ENCODE measurements at regions of chr3 and their contacts with region 1.

Region 1: DNA sequence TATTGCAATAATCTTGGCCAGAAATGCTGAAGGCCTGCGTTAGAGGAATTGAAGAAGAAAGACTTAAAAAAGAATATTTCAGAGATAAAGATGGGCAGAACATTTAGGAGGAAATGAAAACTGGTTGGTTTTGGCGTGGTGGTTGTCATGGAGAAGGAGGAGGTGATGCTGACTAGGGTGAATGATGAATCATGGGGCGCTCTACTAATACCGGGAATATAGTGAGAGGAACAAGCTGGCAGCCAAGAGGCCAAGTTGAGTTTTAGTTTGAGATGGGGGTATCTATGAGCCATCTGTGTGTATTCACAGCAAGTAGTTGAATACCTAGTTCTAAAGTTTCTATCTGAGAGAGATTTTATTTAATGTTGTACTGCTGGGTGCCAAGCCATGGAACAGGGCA is 6.8 kb upstream of the GAP43 start:
- DNase-seq: peak; percentile 67
- H3K4me3 Mint-ChIP-seq: no peak overlapping the region
- H3K27ac Mint-ChIP-seq: no peak overlapping the region
- H3K4me1 Mint-ChIP-seq: peaks cover 23% of the 10 kb centered on the region
- H3K27me3 Mint-ChIP-seq: peaks cover 10% of the 10 kb centered on the region

Region 2: GRCh38 chr3:115502128-115502527 is 114.3 kb before region 1 on chr3:
- CTCF ChIA-PET with region 1: no interaction called
- POLR2A ChIA-PET with region 1: no interaction called
- intact Hi-C with region 1: no loop called
- DNase-seq: no peak
- H3K4me3 Mint-ChIP-seq: no peak overlapping the region
- H3K27ac Mint-ChIP-seq: no peak overlapping the region
- H3K4me1 Mint-ChIP-seq: no peaks in the 10 kb centered on the region
- H3K27me3 Mint-ChIP-seq: peaks cover 6% of the 10 kb centered on the region

Region 3: DNA sequence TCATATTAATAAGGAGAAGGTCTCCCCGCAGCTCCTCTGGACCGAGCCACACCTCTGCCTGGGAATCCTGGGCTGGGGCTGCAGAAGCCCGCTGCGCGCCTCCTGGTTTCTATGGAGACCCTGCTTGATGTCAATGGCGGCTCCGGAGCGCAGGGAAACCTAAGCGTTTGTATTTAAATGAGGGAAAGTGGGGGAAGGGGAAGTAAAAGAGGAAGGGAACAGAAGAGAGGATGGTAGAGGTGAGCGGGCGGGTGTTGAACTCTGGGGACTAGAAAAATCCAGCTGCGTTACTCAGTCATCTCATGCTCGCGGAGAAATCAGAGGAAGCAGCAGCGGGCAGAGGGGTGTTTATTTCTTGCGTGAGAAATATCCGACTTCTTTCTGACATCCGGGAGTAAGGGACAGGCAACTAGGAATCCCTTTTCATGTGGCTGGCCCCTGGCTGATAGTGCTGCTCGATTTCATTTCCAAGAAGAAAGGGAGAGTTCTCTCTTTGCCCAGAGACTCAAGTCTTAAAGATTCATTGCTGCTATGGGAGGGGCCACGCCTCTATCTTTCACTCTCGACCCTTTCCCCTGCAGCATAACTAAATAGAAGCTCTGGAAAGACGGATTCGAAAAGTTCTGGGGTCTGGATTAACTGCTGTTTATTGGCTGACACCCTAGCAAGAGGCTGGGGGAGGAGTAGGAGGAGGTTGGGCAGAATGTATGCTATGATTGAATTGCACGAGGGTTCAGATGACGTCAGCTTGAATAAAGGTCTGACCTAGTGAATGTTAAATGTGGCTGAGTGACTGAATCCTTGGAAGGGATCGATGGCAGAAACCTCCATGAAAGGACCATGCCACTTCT is 103.7 kb before region 1 on chr3:
- CTCF ChIA-PET with region 1: no interaction called
- POLR2A ChIA-PET with region 1: no interaction called
- intact Hi-C with region 1: loop called (anchors 1 kb)
- DNase-seq: peak; percentile 40
- H3K4me3 Mint-ChIP-seq: peak overlapping the region; percentile 79
- H3K27ac Mint-ChIP-seq: no peak overlapping the region
- H3K4me1 Mint-ChIP-seq: peaks cover 13% of the 10 kb centered on the region
- H3K27me3 Mint-ChIP-seq: peaks cover 14% of the 10 kb centered on the region

Region 4: DNA sequence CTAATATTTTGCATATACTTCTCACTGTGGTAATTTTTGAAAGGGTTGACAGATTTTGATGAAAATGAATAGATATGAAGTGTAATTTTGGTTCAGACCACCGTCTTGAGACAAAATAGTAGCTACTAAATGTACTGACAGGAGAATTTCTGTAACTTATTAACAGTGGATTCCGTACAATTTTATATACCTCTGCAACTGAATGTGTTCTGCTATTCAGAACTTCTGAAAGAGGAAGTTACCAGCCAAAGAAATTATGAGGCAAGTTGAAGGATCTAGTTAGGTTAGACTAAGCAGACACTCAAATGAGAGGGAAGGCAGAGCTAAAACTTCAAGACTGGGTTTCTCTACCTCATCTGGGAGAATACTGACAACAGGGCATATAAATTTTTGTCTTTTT is 36.3 kb after region 1 on chr3:
- CTCF ChIA-PET with region 1: no interaction called
- POLR2A ChIA-PET with region 1: no interaction called
- intact Hi-C with region 1: no loop called
- DNase-seq: no peak
- H3K4me3 Mint-ChIP-seq: no peak overlapping the region
- H3K27ac Mint-ChIP-seq: no peak overlapping the region
- H3K4me1 Mint-ChIP-seq: peaks cover 12% of the 10 kb centered on the region
- H3K27me3 Mint-ChIP-seq: peaks cover 2% of the 10 kb centered on the region

Region 5: DNA sequence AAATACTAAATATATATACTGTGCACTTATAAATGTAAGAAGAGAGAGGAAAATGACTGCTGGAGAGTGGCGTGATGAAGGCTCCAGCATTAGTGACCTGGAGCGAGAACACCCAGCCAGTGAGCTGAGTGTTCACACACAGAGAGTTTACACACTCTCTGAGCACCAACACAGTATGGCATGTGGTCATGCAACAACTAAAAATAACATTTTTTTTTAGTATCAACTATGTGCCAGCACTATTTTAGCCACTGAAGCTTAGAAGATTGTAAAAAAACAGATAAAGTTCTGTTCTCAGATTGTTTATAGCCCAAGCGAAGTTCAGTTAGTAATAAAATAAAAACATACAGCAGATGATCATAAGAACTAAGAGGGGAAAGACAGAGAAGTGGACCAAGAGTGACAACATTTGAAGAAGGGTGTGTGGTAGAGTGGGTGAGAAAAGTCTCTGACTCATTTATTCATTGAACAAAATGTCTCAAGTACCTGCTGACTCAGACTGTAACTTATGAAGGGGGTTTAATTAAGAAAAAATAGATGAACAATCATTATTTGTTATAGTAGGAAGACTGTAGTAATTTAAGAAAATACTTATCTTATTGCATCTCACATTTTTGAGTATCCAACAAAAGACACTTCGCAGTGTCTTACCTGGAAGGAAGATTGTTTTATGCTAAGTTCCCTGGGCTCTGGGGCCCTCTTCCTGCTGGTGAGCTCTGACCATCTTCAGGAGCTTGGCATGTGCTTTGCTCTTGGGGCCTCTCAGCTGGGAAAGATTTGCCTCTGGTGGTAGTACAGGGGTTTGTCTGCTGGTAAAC is 50.7 kb after region 1 on chr3:
- CTCF ChIA-PET with region 1: no interaction called
- POLR2A ChIA-PET with region 1: no interaction called
- intact Hi-C with region 1: loop called (anchors 1 kb)
- DNase-seq: no peak
- H3K4me3 Mint-ChIP-seq: no peak overlapping the region
- H3K27ac Mint-ChIP-seq: peak overlapping the region; percentile 43
- H3K4me1 Mint-ChIP-seq: peaks cover 34% of the 10 kb centered on the region
- H3K27me3 Mint-ChIP-seq: no peaks in the 10 kb centered on the region

Region 6: GRCh38 chr3:116188231-116188785 is 571.8 kb after region 1 on chr3:
- CTCF ChIA-PET with region 1: no interaction called
- POLR2A ChIA-PET with region 1: no interaction called
- intact Hi-C with region 1: no loop called
- DNase-seq: no peak
- H3K4me3 Mint-ChIP-seq: no peak overlapping the region
- H3K27ac Mint-ChIP-seq: no peak overlapping the region
- H3K4me1 Mint-ChIP-seq: no peaks in the 10 kb centered on the region
- H3K27me3 Mint-ChIP-seq: no peaks in the 10 kb centered on the region